AG04449 (cell line): ENCODE measurements at regions of chr1 and their contacts with region 1.

Region 1: DNA sequence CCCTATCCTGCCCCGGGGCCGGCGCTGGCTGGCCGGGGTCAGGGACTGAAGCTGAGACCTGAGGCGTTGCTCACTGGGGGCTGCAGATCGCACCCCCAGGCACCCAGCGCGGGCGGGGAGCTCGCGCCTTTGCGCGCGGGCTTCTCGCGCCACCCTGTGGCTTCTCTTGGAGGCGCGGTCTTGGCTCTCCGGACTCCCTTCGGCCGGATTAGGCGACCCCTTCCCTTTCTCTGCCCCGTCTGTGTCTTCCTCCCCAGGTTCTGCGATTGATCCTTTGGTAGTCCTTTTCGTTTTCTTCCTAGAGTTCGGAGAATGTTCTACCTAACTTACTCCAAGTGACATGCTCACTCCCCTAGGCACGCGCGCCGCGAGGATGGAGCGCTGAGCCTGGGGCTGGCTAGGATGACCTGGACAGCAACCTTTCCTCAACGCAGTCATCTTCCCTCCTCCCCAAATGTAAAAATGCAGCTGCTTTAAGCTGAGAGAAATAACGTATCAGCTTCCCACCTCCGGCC is 495 bp upstream of the NTRK1 start:
- DNase-seq: no peak
- H3K4me3 ChIP-seq: peak overlapping the region; percentile 48
- CTCF ChIP-seq: peak; percentile 86

Region 2: GRCh38 chr1:156767101-156767878 is 92.9 kb before region 1 on chr1 and contains the start of gene PRCC:
- CTCF ChIA-PET with region 1: interaction called, 24 read pairs
- POLR2A ChIA-PET with region 1: interaction called, 5 read pairs
- DNase-seq: peak; percentile 99
- H3K4me3 ChIP-seq: peak within 1 kb of the TSS; percentile 95
- CTCF ChIP-seq: no peak

Region 3: DNA sequence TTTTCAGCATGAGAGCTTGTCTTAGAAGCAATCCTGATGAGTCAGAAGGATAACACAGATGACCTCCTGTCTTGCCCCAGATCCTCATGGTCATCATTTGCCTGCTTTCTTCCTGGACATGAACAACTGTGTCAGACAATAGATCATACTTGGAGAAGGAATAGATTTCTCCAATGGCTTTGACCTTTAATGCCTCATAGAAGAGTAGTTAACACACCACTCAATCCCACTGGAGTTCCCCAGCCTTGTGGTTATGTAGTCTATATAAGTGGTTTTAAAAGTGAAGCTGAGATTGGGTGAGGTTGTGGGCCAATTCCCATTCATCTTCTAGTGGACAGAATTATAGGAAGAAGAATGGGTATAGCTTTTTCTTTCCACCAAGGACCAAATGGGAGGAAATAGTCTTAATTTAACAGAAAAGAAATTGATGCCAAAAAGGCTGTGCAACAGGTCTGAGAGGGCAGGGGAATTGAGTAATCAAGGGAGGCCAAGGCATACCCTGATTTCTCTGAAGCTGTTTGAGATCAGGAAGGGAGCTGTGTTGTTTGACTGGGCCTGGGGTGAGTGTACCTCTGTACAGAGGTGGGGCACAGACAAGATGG is 78.5 kb before region 1 on chr1:
- CTCF ChIA-PET with region 1: interaction called, 10 read pairs
- POLR2A ChIA-PET with region 1: no interaction called
- DNase-seq: no peak
- H3K4me3 ChIP-seq: no peak overlapping the region
- CTCF ChIP-seq: no peak

Region 4: GRCh38 chr1:156821801-156822200 is 38.4 kb before region 1 on chr1:
- CTCF ChIA-PET with region 1: interaction called, 476 read pairs
- POLR2A ChIA-PET with region 1: no interaction called
- DNase-seq: peak; percentile 19
- H3K4me3 ChIP-seq: no peak overlapping the region
- CTCF ChIP-seq: no peak

Region 5: GRCh38 chr1:156876281-156876680 is 16.1 kb after region 1 on chr1:
- CTCF ChIA-PET with region 1: interaction called, 49 read pairs
- POLR2A ChIA-PET with region 1: no interaction called
- DNase-seq: no peak
- H3K4me3 ChIP-seq: no peak overlapping the region
- CTCF ChIP-seq: peak; percentile 21

Region 6: DNA sequence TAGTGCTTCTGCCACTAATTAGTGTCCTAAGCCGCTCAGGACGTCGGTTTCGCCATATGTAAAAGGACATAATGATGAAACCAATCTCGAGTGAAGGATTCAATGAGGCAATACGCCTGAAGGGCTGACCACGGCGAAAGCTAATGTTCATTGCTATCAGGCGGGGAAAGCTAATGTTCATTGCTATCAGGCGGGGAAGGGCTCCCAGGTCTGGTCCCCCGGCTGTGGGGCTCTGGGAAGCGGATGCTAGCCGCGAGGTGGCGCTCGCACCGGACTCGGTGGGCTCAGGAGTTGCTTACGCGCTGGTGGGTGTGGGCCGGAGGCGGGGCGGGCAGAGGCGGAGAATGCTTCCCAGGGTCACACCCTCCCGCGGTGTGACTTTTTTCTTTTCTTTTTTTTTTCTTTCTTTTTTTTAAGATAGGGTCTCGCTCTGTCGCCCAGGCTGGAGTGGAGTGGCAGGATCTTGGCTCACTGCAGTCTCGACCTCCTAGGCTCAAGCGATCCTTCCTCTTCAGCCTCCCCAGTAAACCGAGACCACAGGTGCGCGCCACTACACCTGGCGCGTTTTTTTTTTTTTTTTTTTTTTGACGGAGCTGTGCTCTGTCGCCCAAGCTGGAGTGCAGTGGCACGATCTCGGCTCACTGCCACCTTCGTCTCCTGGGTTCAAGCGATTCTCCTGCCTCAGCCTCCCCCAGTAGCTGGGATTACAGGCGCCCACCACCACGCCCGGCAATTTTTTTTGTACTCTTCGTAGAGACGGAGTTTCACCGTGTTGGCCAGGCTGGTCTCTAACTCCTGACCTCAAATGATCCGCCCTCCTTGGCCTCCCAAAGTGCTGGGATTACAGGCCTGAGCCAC is 32.2 kb after region 1 on chr1:
- CTCF ChIA-PET with region 1: interaction called, 175 read pairs
- POLR2A ChIA-PET with region 1: interaction called, 3 read pairs
- DNase-seq: no peak
- H3K4me3 ChIP-seq: peak overlapping the region; percentile 30
- CTCF ChIP-seq: peak; percentile 97